Vagina (tissue), 2 donors: ENCODE measurements at regions of chr4 and their contacts with region 1.

Region 1: GRCh38 chr4:118888666-118889311 is at the start of gene SYNPO2:
- DNase-seq: peak in 1 of 2 donors; percentile 93
- H3K4me3 ChIP-seq: peak within 1 kb of the TSS; percentile 62
- H3K27ac ChIP-seq: peak within 1 kb of the TSS; percentile 80
- H3K4me1 ChIP-seq: peaks cover 11% of the 10 kb centered on the region
- H3K27me3 ChIP-seq: no peaks in the 10 kb centered on the region
- CTCF ChIP-seq: no peak
- POLR2A ChIP-seq: peak in 1 of 2 donors; percentile 73
- total RNA-seq, gene SYNPO2: 109 TPM

Region 2: DNA sequence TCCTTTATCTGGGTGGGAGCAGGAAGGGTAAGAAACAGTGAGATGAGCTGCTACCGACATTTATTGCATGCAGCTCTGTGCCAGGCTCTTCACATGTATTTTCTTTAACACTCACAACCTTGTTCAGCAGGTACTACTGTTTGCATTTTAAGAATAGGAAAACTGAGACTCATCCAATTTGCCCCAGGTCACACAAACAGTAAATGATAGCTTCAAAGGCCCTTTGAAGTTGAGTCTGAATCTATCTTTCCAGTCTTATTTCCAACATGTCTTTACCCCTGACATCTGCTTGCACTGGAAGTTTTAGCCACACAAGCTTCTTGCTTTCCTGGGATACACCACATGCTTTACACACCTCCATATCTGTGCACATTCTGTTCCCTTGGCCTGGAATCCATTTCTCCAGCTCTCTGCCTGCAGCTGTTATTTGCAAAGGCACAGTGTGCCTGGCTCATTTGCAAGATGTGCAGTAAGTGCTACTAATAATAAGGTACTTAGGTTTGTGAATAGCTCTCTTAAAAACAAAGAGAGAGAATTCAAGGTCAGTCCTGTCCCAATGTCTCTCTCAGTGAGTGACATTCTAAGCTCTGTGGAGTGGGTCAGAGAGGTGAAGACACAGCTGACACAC is 142.4 kb before region 1 on chr4:
- intact Hi-C with region 1: loop called (anchors 2 kb)
- DNase-seq: no peak
- H3K4me3 ChIP-seq: no peak overlapping the region
- H3K27ac ChIP-seq: peak overlapping the region; percentile 47
- H3K4me1 ChIP-seq: peaks cover 27% of the 10 kb centered on the region
- H3K27me3 ChIP-seq: no peaks in the 10 kb centered on the region
- CTCF ChIP-seq: no peak
- POLR2A ChIP-seq: no peak

Region 3: GRCh38 chr4:118835571-118836300 is 53.1 kb before region 1 on chr4 and contains the start of gene SEC24D:
- intact Hi-C with region 1: loop called (anchors 10 kb)
- DNase-seq: no peak
- H3K4me3 ChIP-seq: peak within 1 kb of the TSS; percentile 70 to 100
- H3K27ac ChIP-seq: peak within 1 kb of the TSS; percentile 93
- H3K4me1 ChIP-seq: peaks cover 44% of the 10 kb centered on the region
- H3K27me3 ChIP-seq: no peaks in the 10 kb centered on the region
- CTCF ChIP-seq: no peak
- POLR2A ChIP-seq: peak in 1 of 2 donors; percentile 90
- total RNA-seq, gene SEC24D: 24.1 TPM

Region 4: DNA sequence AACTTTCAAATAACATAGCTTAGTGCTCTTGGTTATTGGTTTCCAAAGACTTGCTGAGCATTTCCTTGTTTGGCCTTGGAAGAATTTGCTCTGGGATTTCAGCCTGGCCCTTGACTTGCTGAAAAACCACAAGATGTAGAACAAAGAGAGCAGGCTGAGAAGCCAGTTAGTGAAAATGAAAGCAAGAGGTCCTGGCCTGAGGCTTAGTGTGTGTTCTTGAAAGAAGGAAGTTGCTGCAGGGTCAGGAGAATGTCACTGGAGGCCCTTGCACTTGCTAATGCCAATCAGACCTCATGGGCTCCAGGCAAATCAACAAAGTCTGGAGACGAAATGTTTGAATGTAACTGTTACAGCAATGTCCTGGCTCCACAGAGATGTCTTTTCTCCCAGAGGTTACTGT is 79.2 kb after region 1 on chr4:
- intact Hi-C with region 1: loop called (anchors 2 kb)
- DNase-seq: no peak
- H3K4me3 ChIP-seq: no peak overlapping the region
- H3K27ac ChIP-seq: peak overlapping the region; percentile 75
- H3K4me1 ChIP-seq: peaks cover 50% of the 10 kb centered on the region
- H3K27me3 ChIP-seq: no peaks in the 10 kb centered on the region
- CTCF ChIP-seq: no peak
- POLR2A ChIP-seq: no peak